K562 (cell line): ENCODE measurements at regions of chr2 and their contacts with region 1.

Region 1: GRCh38 chr2:9112079-9112721 is 94.4 kb upstream of the ASAP2 start:
- DNase-seq: peak; percentile 66 to 76 (median 72)
- ATAC-seq: peak; percentile 71
- H3K4me3 ChIP-seq: no peak overlapping the region
- H3K27ac ChIP-seq: no peak overlapping the region; the same call in 2 of the 3 replicates
- H3K4me1 ChIP-seq: peaks cover 11 to 12% of the 10 kb centered on the region in 2 experiments; a peak in 4 of 5 replicates
- H3K27me3 ChIP-seq: no peaks in the 10 kb centered on the region
- CTCF ChIP-seq: no peak
- EP300 ChIP-seq: no peak
- POLR2A ChIP-seq: no peak
- RAD21 ChIP-seq: no peak

Region 2: GRCh38 chr2:8514796-8515758 is 597.1 kb before region 1 on chr2:
- CTCF ChIA-PET with region 1: no interaction called
- POLR2A ChIA-PET with region 1: no interaction called
- in situ Hi-C with region 1: no loop called
- intact Hi-C with region 1: loop called (anchors 10 kb)
- DNase-seq: no peak
- ATAC-seq: peak; percentile 39
- H3K4me3 ChIP-seq: no peak overlapping the region
- H3K27ac ChIP-seq: no peak overlapping the region
- H3K4me1 ChIP-seq: no peaks in the 10 kb centered on the region; a peak in 2 of 5 replicates
- H3K27me3 ChIP-seq: peaks cover 17 to 62% of the 10 kb centered on the region in 2 experiments; a peak in 4 of 5 replicates
- CTCF ChIP-seq: no peak
- EP300 ChIP-seq: no peak
- POLR2A ChIP-seq: no peak
- RAD21 ChIP-seq: no peak

Region 3: GRCh38 chr2:8872821-8873432 is 239.3 kb before region 1 on chr2:
- CTCF ChIA-PET with region 1: no interaction called
- POLR2A ChIA-PET with region 1: no interaction called
- in situ Hi-C with region 1: no loop called
- intact Hi-C with region 1: loop called (anchors 5 kb)
- DNase-seq: peak; percentile 29 to 59 (median 34)
- ATAC-seq: peak; percentile 67
- H3K4me3 ChIP-seq: no peak overlapping the region
- H3K27ac ChIP-seq: no peak overlapping the region
- H3K4me1 ChIP-seq: peaks cover 0 to 2% of the 10 kb centered on the region in 2 experiments; a peak in 1 of 5 replicates
- H3K27me3 ChIP-seq: no peaks in the 10 kb centered on the region
- CTCF ChIP-seq: peak; percentile 40 to 62 (median 50); a peak in 5 of 6 replicates
- EP300 ChIP-seq: no peak
- POLR2A ChIP-seq: no peak
- RAD21 ChIP-seq: peak; percentile 69 to 75